ENCODE measurements at regions of chr12 and their contacts with region 1.

Region 1: DNA sequence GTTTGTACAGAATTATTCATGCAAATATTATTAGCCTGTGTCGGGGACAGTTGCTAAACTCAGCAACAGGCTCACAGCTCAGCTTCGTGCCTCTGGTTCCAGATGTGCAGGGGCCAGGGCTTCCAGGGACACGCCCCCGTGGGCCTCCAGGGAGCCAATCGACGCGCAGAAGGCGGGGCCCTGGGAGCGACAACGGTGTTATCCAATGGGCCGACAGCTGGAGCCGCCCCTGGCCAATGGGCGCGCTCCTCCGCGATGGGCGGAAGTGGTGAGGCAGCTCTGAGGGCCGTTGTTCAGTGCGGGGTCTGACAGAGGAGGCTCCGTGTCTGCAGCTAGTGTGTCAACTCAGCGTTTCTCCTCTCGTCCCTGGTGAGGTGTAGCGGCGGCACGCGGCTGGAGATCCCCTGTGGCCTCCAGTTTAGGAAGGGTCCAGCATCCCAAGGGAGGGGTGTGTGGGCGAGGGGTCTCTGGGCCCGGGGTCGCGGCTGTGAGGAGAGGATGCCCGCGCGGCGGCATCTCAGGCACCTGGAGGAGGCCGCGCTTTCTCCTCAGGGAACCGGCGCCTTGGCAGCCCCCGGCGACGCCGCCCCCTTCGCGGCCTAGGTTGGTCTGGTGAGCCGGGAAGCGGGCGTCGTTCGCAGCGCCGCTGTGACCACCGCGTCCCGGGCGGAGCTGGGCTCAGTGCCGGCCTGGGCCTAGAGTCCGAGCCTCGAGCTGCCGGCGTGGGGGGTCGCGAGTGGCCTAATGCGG is at the start of gene TRAFD1:
- DNase-seq: peak; percentile 99
- H3K4me3 Mint-ChIP-seq: peak within 1 kb of the TSS; percentile 82
- H3K27ac Mint-ChIP-seq: peak within 1 kb of the TSS; percentile 80
- H3K4me1 Mint-ChIP-seq: peaks cover 29% of the 10 kb centered on the region
- H3K27me3 Mint-ChIP-seq: no peaks in the 10 kb centered on the region
- CTCF ChIP-seq: no peak
- total RNA-seq, gene TRAFD1: 38.8 and 40.7 TPM in 2 replicates

Region 2: GRCh38 chr12:111599459-111600204 is 525.8 kb before region 1 on chr12:
- CTCF ChIA-PET with region 1: no interaction called
- intact Hi-C with region 1: no loop called
- DNase-seq: peak; percentile 95
- H3K4me3 Mint-ChIP-seq: peak overlapping the region; percentile 94
- H3K27ac Mint-ChIP-seq: peak overlapping the region; percentile 99
- H3K4me1 Mint-ChIP-seq: peaks cover 14% of the 10 kb centered on the region
- H3K27me3 Mint-ChIP-seq: no peaks in the 10 kb centered on the region
- CTCF ChIP-seq: no peak

Region 3: DNA sequence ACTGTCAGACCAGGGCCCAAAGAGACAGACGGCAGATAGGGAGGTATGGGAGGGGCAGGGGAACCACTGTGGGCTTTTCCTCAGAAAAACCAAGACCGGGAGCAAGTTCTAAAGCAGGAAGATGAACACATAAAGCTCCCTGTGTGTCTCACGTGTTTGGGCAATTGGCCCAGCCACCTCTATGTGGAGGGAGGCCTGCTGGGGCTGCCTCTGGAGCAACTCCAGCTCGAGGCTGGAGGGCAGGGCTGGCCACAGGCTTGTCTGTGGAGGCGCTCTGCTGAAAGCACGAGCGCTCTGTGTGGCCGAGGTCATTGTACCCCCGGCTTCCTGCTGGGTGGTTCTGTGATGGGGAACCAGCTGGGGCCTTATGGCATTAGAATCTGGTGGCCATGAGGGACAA is 36.3 kb after region 1 on chr12:
- CTCF ChIA-PET with region 1: no interaction called
- intact Hi-C with region 1: no loop called
- DNase-seq: no peak
- H3K4me3 Mint-ChIP-seq: no peak overlapping the region
- H3K27ac Mint-ChIP-seq: no peak overlapping the region
- H3K4me1 Mint-ChIP-seq: no peaks in the 10 kb centered on the region
- H3K27me3 Mint-ChIP-seq: no peaks in the 10 kb centered on the region
- CTCF ChIP-seq: no peak

Region 4: GRCh38 chr12:112750971-112751370 is 625.5 kb after region 1 on chr12:
- CTCF ChIA-PET with region 1: no interaction called
- intact Hi-C with region 1: loop called (anchors 5 kb)
- DNase-seq: no peak
- H3K4me3 Mint-ChIP-seq: no peak overlapping the region
- H3K27ac Mint-ChIP-seq: no peak overlapping the region
- H3K4me1 Mint-ChIP-seq: no peaks in the 10 kb centered on the region
- H3K27me3 Mint-ChIP-seq: peaks cover 89% of the 10 kb centered on the region
- CTCF ChIP-seq: no peak